BJ (cell line): ENCODE measurements at regions of chr5 and their contacts with region 1.

Region 1: DNA sequence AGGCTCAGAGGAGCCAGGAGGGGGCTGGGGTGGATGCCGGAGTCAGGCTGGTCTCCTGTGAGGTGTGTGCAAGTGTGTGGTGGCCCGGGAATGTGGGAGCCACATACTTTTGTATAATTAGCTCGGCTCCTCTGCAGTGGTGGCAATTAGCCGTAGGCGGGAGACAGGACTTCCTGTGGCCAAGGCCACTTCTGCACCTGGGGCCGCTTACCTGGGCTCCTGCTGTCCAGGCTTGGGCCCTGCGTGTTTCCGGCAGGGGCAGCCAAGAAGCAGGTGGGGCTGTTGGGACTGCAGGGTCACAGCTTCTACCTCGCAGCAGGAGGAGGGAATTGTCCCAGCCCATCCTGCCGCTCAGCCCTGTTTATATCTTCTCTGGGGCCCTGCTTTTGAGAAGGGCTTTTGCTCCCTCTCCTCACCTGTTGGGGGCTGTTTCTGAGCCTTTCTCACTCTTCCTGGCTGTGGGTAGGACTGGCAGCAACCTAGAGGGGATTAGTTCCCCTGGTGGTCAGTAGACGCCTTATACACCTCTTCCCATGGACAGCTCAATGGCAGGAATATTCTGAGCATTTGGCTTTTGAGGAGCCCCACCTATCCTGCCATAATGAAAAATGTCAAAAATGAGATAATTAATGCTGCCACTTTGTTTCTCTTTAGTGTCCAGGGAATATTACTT is 145.4 kb upstream of the PITX1 start:
- DNase-seq: no peak
- H3K4me3 ChIP-seq: no peak overlapping the region
- H3K27me3 ChIP-seq: peaks cover 2% of the 10 kb centered on the region
- CTCF ChIP-seq: no peak

Region 2: DNA sequence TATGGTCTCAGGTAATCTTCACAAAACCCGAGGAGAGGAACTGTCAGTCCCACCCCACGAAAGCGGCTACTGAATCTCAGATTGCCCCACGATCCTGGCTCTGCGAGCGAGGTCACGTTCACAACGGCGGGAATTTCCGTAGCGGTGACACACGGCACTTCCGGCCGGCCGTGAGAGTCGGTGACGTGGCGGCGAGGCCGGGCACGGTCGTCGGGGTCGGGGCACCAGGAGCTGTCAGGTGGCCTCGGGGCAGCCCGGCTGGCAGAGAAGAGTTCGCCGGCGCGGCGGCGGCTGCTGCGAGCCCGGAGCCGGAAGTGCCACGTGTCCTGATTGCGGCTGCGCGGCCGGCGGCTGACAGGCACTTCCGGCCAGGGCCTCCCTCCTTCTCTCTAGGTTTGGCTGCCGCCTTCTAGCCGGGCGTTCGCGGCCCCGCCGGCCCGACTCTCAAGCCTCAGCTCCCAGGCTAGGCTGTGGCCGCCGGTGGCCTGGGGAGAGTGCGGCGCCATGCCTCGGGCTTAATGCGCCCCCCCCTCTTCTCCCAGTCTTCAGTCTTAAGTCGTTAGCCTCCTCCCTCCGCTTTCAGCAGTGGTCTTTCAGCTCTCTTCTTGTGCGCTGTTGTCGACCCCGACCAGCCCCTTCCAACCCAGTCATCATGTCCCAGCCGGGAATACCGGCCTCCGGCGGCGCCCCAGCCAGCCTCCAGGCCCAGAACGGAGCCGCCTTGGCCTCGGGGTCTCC is 530.9 kb before region 1 on chr5 and contains the start of gene SEC24A:
- CTCF ChIA-PET with region 1: no interaction called
- POLR2A ChIA-PET with region 1: interaction called, 15 read pairs
- DNase-seq: no peak
- H3K4me3 ChIP-seq: peak within 1 kb of the TSS; percentile 99
- H3K27me3 ChIP-seq: no peaks in the 10 kb centered on the region
- CTCF ChIP-seq: no peak
- polyA plus RNA-seq, gene SEC24A: 27.9 and 35.0 TPM in 2 replicates